AG04449 (cell line): ENCODE measurements at regions of chr1 and their contacts with region 1.

Region 1: GRCh38 chr1:91929250-91929649 is 20.0 kb upstream of the BRDT start:
- DNase-seq: no peak
- H3K4me3 ChIP-seq: no peak overlapping the region
- CTCF ChIP-seq: no peak

Region 2: DNA sequence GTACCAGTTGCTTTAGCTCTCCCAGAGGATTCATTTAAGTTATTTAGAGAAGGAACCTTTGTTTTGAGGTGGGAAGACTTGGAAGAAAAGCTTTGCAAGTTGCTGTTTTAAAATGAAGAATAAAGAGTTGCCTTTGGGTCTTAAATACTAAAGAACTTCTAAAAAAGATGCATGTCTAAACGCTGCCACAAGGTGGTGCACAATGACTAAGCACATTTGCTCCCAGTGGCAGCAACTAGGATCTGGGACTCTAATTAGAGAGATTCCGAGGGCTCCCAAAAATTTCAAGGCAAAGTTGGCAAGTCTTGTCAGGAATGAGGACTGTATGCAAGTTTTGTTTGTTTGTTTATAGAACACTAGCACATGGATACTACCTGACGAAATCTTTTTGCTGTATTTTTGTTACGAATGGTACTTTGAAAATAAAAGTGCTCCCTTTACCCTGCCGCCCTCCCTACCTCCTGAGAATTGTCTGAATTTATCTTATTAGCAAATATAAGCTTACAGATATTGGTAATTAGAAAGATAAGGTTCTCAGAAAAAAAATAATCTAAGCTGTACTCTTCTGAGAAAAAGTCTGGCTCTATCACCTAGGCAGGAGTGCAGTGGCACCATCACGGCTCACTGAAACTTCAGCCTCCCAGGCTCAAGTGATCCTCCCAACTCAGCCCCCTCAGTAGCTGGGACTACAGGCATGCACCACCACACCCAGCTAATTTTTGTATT is 646.4 kb before region 1 on chr1:
- CTCF ChIA-PET with region 1: interaction called, 16 read pairs
- POLR2A ChIA-PET with region 1: no interaction called
- DNase-seq: peak; percentile 21
- H3K4me3 ChIP-seq: no peak overlapping the region
- CTCF ChIP-seq: peak; percentile 72

Region 3: GRCh38 chr1:91500756-91501522 is 428.3 kb before region 1 on chr1 and contains the start of gene CDC7:
- CTCF ChIA-PET with region 1: interaction called, 426 read pairs
- POLR2A ChIA-PET with region 1: no interaction called
- DNase-seq: peak; percentile 38
- H3K4me3 ChIP-seq: peak within 1 kb of the TSS; percentile 88
- CTCF ChIP-seq: peak; percentile 53

Region 4: GRCh38 chr1:91523482-91523881 is 405.8 kb before region 1 on chr1:
- CTCF ChIA-PET with region 1: interaction called, 102 read pairs
- POLR2A ChIA-PET with region 1: no interaction called
- DNase-seq: no peak
- H3K4me3 ChIP-seq: no peak overlapping the region
- CTCF ChIP-seq: no peak

Region 5: DNA sequence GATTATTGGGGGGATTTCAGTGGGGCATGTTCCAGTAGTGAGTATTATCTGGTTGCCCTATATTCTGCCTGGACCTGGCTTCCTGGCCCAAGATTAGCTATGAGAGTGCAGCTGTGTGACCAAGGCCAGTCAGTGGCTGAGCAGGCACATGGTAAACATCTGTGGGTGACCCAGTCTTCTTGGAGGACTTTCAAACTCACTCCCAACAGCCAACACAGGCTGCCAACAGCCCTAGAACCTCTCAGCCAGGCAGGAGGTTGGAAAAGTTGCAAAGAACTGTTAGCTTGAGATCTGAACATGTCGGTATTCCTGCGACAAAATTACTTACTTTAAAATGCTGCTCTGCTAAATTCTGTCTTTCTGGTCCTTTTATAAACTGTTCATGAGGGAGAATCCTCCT is 235.7 kb before region 1 on chr1:
- CTCF ChIA-PET with region 1: no interaction called
- POLR2A ChIA-PET with region 1: no interaction called
- DNase-seq: no peak
- H3K4me3 ChIP-seq: no peak overlapping the region
- CTCF ChIP-seq: no peak

Region 6: GRCh38 chr1:91844862-91845528 is 84.3 kb before region 1 on chr1:
- CTCF ChIA-PET with region 1: no interaction called
- POLR2A ChIA-PET with region 1: no interaction called
- DNase-seq: peak; percentile 95
- H3K4me3 ChIP-seq: no peak overlapping the region
- CTCF ChIP-seq: no peak

Region 7: DNA sequence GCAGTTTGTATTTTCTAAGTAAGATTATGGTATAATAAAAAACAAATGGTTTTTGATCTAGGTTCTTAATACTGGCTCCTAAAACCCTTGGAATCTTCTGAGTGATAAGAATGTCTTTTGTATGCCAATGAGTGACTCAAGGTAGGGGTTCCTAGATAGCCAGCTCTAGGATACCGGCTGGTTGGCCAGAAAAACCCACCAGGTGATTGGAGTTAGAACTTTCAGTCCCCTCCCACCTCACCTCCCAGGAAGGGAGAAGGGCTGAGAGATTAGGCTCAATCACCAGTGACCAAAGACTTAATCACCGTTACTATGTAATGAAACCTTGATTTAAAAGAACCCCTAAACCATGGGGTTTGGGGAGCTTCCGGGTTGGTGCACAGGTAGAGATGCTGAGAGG is 11.2 kb after region 1 on chr1:
- CTCF ChIA-PET with region 1: interaction called, 30 read pairs
- POLR2A ChIA-PET with region 1: no interaction called
- DNase-seq: no peak
- H3K4me3 ChIP-seq: no peak overlapping the region
- CTCF ChIP-seq: no peak

Region 8: DNA sequence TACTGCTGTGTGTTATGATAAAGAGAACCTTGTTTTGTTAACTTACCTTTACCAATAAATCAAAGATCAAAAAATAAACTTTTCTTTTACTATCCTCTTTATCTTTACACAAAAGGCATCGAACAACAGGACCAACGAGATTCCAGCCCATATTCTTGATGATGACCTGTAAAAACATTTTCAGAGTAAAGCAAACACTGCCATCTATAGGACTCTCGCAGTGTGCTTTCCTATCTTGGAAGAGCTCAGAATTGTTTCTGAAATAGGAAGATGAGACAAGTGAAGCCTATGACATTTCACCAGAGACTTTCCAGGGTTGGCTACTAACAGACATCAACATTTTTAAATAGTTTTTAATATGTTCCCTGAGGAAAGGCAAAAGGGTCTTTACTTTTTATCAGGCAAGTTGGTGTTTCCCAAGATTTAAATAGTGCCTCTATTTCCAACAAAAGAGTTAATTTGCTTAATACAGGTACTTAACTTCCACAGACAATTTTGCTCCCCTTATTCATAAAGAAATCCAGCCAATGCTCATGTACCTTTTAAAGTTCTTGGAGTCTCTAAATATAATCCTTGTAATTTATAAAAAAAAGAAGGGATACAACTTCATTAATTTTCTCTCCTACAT is 362.2 kb after region 1 on chr1:
- CTCF ChIA-PET with region 1: interaction called, 24 read pairs
- POLR2A ChIA-PET with region 1: no interaction called
- DNase-seq: peak; percentile 17
- H3K4me3 ChIP-seq: no peak overlapping the region
- CTCF ChIP-seq: peak; percentile 64